ENCODE measurements at regions of chr2 and their contacts with region 1.

Region 1: DNA sequence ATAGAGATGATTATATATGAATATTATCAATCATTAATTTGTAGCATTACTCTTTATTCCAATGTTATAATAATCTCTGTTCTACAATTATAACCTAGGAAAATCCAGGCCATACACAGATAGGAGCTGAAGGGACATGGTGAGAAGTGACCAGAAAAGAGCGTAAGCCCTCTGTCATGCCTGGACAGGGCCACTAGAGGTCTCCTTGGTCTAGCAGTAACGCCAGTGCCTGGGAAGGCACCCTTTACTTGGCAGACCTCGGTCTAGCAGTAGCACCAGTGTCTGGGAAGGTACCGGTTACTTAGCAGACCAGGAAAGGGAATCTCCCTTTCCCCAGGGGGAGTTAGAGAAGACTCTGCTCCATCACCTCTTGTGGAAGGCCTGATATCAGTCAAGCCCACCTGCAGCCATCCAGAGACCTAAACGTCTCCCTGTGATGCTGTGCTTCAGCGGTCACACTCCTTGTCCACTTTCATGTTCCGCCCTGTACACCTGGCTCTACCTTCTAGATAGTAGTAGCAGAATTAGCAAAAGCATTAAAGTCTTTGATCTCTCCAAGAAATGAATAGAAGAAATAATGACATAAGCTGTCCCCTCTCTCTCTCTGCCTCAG is 447.5 kb upstream of the FSIP2 start:
- DNase-seq: peak; percentile 52
- ATAC-seq: no peak
- H3K4me3 Mint-ChIP-seq: no peak overlapping the region
- H3K27ac Mint-ChIP-seq: no peak overlapping the region
- H3K4me1 Mint-ChIP-seq: no peaks in the 10 kb centered on the region
- H3K27me3 Mint-ChIP-seq: no peaks in the 10 kb centered on the region

Region 2: DNA sequence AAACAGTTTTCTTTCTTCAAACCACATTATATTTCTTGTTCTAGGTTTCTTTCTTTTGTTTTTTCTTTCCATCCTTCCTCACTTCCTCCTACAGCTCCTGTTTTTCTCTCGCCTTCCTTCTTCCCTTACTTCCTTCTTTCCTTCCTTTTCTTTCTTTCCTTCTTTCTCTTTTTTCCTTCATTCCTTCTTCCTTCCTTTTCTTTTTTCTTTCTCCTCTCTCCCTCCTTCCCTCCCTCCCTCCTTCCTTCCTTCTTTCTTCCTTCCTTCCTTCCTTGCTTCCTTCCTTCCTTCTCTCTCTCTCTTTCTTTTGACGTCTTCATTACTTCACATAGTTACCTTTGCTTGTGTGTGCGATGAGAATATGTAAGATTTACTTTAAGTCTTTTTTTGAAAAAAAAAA is 22.5 kb before region 1 on chr2:
- CTCF ChIA-PET with region 1: no interaction called
- POLR2A ChIA-PET with region 1: no interaction called
- intact Hi-C with region 1: loop called in 1 of 2 experiments (anchors 1 kb)
- DNase-seq: no peak
- ATAC-seq: no peak
- H3K4me3 Mint-ChIP-seq: no peak overlapping the region
- H3K27ac Mint-ChIP-seq: no peak overlapping the region
- H3K4me1 Mint-ChIP-seq: no peaks in the 10 kb centered on the region
- H3K27me3 Mint-ChIP-seq: no peaks in the 10 kb centered on the region

Region 3: GRCh38 chr2:186256540-186256939 is 965.4 kb after region 1 on chr2:
- CTCF ChIA-PET with region 1: no interaction called
- POLR2A ChIA-PET with region 1: no interaction called
- intact Hi-C with region 1: loop called in 1 of 2 experiments (anchors 5 kb)
- DNase-seq: no peak
- ATAC-seq: no peak
- H3K4me3 Mint-ChIP-seq: no peak overlapping the region
- H3K27ac Mint-ChIP-seq: no peak overlapping the region
- H3K4me1 Mint-ChIP-seq: no peaks in the 10 kb centered on the region
- H3K27me3 Mint-ChIP-seq: no peaks in the 10 kb centered on the region

Measured in activated CD4-positive, alpha-beta T cell treated with anti-CD3 and anti-CD28 coated beads for 36 hours (primary cell).